ENCODE measurements at regions of chr3 and their contacts with region 1.

Region 1: GRCh38 chr3:29280404-29281093 is at the start of gene RBMS3:
- DNase-seq: peak; percentile 91
- ATAC-seq: peak; percentile 83
- H3K4me3 ChIP-seq: peak within 1 kb of the TSS; percentile 71
- H3K27ac ChIP-seq: peak within 1 kb of the TSS; percentile 69
- H3K4me1 ChIP-seq: peaks cover 23% of the 10 kb centered on the region
- H3K27me3 ChIP-seq: no peaks in the 10 kb centered on the region
- CTCF ChIP-seq: peak; percentile 58
- total RNA-seq, gene RBMS3: 5.4 and 13.5 TPM in 2 replicates

Region 2: DNA sequence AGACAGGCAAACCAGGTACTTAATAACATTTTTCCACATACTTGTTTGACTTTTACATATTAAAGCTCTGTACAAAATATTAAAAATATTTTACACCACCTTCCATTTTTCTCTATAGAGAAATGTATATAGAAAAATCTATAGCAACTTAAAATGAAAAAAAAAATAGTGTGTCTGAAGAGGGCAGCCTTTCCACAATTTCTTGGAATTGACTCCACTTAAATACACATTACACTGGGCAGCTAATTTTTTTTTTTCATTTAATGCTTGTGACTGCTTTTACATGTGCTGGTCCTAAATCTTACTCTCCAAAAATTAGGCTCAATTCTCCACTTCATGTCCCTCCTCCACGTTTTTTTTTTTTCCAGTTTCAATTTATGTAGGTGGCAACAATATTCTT is 426.7 kb before region 1 on chr3:
- CTCF ChIA-PET with region 1: no interaction called
- POLR2A ChIA-PET with region 1: no interaction called
- intact Hi-C with region 1: loop called (anchors 2 kb)
- DNase-seq: peak; percentile 46
- ATAC-seq: peak; percentile 67
- H3K4me3 ChIP-seq: no peak overlapping the region
- H3K27ac ChIP-seq: no peak overlapping the region
- H3K4me1 ChIP-seq: peaks cover 5% of the 10 kb centered on the region; the same call in 1 of the 2 replicates
- H3K27me3 ChIP-seq: no peaks in the 10 kb centered on the region
- CTCF ChIP-seq: peak; percentile 58

Region 3: DNA sequence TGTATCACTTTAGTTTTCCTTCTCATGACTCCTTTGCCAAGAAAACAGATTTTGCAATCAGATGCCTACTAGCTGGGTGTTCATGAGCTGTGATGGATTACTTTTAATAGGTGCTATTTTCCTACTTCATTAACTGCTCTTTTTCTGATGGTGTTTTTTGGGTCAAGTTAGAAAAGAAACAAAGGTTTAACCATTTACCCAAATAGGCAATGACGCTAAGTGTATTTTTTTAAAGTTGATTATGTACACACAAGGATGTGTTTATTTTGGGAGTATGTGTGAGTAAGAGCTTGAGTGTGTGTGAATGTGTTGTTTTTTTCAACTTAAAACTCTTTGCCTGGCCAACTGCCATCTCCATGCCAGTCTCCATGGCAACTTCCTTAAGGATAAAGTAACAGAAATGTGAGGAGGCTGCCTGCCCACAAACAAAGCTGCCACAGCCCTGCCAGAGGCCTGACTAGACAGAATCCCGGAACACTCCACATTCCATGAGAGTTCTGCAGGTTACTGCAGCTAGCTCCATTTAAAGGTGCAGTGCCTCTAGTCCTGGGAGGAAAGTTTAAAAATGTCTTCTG is 215.3 kb before region 1 on chr3:
- CTCF ChIA-PET with region 1: no interaction called
- POLR2A ChIA-PET with region 1: no interaction called
- intact Hi-C with region 1: loop called (anchors 1 kb)
- DNase-seq: peak; percentile 98
- ATAC-seq: peak; percentile 100
- H3K4me3 ChIP-seq: no peak overlapping the region
- H3K27ac ChIP-seq: peak overlapping the region; percentile 61
- H3K4me1 ChIP-seq: peaks cover 14% of the 10 kb centered on the region
- H3K27me3 ChIP-seq: no peaks in the 10 kb centered on the region
- CTCF ChIP-seq: no peak

Region 4: DNA sequence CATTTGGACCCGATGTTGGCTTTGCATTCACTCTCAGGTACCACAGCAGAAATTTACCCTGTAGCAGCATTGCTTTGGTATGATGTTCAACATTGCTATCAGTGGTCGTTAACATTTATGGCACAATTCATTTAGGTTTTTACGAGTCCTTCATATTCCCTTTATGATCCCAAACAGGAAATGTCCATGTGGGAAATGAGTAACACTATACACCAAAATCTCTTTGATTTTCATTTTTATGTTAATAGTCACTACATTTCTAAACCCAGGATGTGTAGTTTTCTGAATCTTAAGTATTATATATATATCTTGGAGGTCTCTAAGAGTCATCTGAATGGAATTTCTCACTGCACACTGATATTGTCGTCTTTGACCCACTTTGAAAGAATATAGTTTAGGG is 78.2 kb before region 1 on chr3:
- CTCF ChIA-PET with region 1: no interaction called
- POLR2A ChIA-PET with region 1: no interaction called
- intact Hi-C with region 1: loop called (anchors 5 kb)
- DNase-seq: peak; percentile 84
- ATAC-seq: peak; percentile 88
- H3K4me3 ChIP-seq: no peak overlapping the region
- H3K27ac ChIP-seq: peak overlapping the region; percentile 21
- H3K4me1 ChIP-seq: peaks cover 24% of the 10 kb centered on the region
- H3K27me3 ChIP-seq: no peaks in the 10 kb centered on the region
- CTCF ChIP-seq: no peak

Region 5: DNA sequence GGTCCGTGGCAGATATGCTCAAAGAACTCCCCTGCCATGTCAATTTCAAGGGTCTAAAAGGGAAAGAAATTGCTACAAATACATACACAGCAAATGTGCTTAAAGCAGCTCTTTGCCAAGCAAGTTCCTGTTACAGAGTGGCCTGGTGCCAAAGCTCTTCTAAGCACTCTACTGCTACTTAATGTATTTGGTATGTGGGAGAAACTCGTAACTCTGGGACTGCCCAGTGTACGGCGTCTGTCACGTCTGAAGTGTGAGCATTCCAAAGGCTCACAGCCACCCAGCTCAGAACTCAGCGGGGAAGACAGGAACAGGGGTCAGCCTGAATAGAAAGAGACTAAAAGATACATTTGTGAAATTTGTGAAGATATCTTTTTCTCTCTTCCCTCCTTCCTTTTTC is 54.9 kb after region 1 on chr3:
- CTCF ChIA-PET with region 1: no interaction called
- POLR2A ChIA-PET with region 1: interaction called, 8 read pairs
- intact Hi-C with region 1: loop called (anchors 2 kb)
- DNase-seq: peak; percentile 96
- ATAC-seq: peak; percentile 99
- H3K4me3 ChIP-seq: peak overlapping the region; percentile 52
- H3K27ac ChIP-seq: peak overlapping the region; percentile 64
- H3K4me1 ChIP-seq: peaks cover 21% of the 10 kb centered on the region
- H3K27me3 ChIP-seq: no peaks in the 10 kb centered on the region
- CTCF ChIP-seq: no peak

Region 6: DNA sequence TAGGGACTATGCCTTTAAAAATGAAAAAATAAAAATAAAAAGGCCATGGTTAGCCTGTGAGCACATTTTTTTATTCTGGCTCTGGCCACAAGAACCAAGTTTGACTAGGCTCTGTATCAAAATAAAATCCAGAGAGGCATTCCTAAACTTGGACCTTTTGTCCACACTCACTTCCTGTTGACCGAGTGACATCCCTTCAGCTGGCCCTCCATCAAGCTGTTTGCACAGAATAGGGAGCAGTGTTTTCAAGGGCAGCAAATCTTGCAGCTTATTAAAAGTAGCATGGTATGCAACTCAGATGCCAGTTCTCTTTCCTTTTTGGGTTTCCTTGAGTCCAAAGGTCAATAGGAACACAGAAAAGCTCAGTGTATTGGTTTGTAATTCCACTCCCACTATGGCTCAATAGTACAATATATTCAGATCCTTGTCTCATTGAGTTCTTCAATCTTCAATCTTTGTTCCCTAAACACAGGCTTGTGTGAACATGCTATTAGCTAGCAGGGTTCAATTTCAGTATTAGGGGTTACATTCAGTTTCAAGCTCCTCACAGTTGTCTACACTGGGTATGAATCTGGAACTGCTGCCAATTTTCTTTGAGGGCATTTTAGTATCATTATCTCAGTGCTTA is 244.8 kb after region 1 on chr3:
- CTCF ChIA-PET with region 1: no interaction called
- POLR2A ChIA-PET with region 1: no interaction called
- intact Hi-C with region 1: loop called (anchors 1 kb)
- DNase-seq: peak; percentile 60
- ATAC-seq: peak; percentile 91
- H3K4me3 ChIP-seq: no peak overlapping the region
- H3K27ac ChIP-seq: no peak overlapping the region
- H3K4me1 ChIP-seq: peaks cover 12% of the 10 kb centered on the region; the same call in 1 of the 2 replicates
- H3K27me3 ChIP-seq: no peaks in the 10 kb centered on the region
- CTCF ChIP-seq: no peak

Region 7: DNA sequence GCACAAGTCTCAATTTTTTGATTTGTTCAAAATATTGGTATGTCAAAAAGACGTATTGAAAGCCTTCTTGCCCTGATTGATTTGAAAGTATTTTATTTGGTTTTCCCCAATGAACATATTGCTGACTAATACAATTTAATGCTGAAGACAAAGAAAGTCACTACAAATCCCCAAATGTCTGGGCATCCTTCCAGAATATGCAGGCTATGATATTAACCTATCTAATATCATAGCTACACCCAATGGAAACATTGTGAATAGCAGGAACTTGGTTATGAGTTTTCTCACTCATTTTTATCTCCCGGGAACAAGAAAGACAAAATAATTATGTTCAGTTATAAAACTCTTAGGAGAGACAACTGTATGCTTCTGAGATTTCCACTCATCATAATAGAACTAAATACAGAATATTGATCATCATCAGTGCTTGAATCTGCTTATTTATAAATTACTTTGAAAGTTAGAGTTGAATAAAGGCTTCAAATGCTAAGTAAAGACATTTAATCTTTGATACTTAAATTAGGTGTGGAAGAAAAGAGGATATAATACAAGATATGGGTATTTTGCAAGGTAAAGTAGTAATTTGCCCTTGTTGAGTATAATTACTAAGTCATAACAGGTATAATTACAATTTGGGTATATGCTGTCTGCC is 484.2 kb after region 1 on chr3:
- CTCF ChIA-PET with region 1: no interaction called
- POLR2A ChIA-PET with region 1: no interaction called
- intact Hi-C with region 1: loop called (anchors 1 kb)
- DNase-seq: peak; percentile 94
- ATAC-seq: peak; percentile 70
- H3K4me3 ChIP-seq: no peak overlapping the region
- H3K27ac ChIP-seq: no peak overlapping the region
- H3K4me1 ChIP-seq: peaks cover 9% of the 10 kb centered on the region; the same call in 1 of the 2 replicates
- H3K27me3 ChIP-seq: no peaks in the 10 kb centered on the region
- CTCF ChIP-seq: peak; percentile 93